AG04450 (cell line): ENCODE measurements at regions of chr1 and their contacts with region 1.

Region 1: DNA sequence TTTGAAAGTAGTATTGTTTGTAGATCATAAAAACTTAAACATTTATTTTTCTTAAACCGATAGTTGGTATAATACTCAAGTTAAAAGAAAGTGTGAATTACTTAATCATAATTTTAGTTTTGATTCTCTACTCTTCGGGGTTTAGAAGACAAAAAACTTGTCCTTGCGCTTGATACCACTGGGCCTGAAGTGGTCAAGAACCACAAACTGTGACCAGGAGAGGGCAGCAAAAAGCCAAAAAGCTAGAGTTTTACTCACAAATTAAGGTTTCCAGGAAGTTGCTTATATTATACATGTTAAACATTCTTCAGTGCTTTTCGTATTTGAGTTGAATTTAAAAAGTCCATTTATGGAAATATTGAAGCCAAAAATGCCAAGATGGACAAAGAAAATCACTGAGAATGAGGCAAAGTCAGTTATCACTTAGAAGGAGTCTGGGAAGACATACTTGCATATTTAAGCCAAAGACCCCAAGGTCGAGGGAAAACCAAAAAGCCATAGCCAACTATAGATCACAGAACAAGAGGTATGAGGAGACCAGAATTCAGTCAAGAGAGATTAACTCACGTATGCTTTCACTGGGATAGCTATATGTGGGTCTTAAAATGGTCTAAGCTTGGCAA is 34.2 kb downstream of the EFCAB7 start:
- DNase-seq: peak; percentile 8
- H3K4me3 ChIP-seq: no peak overlapping the region
- H3K27ac ChIP-seq: no peak overlapping the region
- H3K27me3 ChIP-seq: no peaks in the 10 kb centered on the region
- CTCF ChIP-seq: peak; percentile 71

Region 2: GRCh38 chr1:63173161-63173560 is 384.3 kb before region 1 on chr1:
- CTCF ChIA-PET with region 1: no interaction called
- POLR2A ChIA-PET with region 1: no interaction called
- DNase-seq: no peak
- H3K4me3 ChIP-seq: no peak overlapping the region
- H3K27ac ChIP-seq: no peak overlapping the region
- H3K27me3 ChIP-seq: no peaks in the 10 kb centered on the region
- CTCF ChIP-seq: no peak

Region 3: DNA sequence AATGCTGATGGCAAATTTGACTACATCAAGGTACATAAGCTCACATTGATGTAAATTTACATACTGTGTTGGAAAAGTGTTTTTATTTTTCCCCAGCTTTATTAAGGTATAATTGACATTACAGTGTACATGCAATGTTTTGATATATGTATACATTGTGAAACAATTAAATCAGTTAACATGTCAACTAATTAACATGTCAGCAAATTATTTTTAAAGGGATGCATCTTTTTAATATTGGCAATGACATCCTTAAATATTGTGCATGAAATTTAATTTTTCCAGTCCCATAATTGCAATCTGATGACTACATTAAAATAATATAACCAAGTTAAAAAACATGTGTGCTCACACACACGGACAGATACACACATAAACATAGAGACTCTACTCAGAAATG is 24.7 kb before region 1 on chr1:
- CTCF ChIA-PET with region 1: interaction called, 18 read pairs
- POLR2A ChIA-PET with region 1: no interaction called
- DNase-seq: no peak
- H3K4me3 ChIP-seq: no peak overlapping the region
- H3K27ac ChIP-seq: no peak overlapping the region
- H3K27me3 ChIP-seq: no peaks in the 10 kb centered on the region
- CTCF ChIP-seq: no peak

Region 4: DNA sequence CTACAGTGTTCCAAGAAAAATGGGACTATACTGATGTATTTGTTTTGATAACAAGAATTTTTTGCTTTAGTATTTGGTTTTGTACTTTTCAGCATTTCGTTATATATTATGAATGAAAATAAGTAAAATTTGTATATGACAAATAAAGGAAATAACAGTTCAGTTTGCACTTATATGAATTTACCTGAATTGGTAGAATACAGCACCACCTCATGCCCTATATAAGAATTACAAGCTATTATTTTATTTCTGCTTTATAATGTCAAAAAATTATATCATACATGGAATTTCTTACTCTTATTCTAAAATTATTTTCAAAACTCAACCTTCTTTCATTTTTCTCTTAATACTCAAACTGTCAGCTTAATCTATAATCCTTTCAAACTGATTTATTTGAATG is 19.5 kb before region 1 on chr1:
- CTCF ChIA-PET with region 1: interaction called, 18 read pairs
- POLR2A ChIA-PET with region 1: no interaction called
- DNase-seq: no peak
- H3K4me3 ChIP-seq: no peak overlapping the region
- H3K27ac ChIP-seq: no peak overlapping the region
- H3K27me3 ChIP-seq: no peaks in the 10 kb centered on the region
- CTCF ChIP-seq: peak; percentile 47

Region 5: GRCh38 chr1:63569068-63569467 is 11.6 kb after region 1 on chr1:
- CTCF ChIA-PET with region 1: interaction called, 18 read pairs
- POLR2A ChIA-PET with region 1: no interaction called
- DNase-seq: no peak
- H3K4me3 ChIP-seq: no peak overlapping the region
- H3K27ac ChIP-seq: no peak overlapping the region
- H3K27me3 ChIP-seq: no peaks in the 10 kb centered on the region
- CTCF ChIP-seq: no peak

Region 6: DNA sequence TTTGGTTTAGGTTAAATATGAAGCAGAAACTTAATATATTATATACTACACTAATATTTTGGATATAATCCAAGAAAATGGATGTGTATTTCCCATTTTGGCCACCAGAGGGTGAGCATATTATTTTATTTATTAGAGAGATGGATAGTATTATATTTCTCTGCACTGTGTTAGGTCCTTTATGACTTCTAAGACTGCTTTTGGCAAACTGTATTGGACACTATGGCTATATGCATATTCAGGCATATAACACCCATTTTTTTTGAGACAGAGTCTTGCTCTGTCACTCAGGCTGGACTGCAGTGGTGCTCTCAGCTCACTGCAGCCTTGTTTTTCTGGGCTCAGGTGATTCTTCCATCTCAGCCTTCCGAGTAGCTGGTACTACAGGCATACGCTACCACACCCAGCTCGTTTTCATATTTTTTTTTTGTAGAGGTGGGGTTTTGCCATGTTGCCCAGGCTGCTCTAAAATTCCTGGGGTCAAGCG is 17.9 kb after region 1 on chr1:
- CTCF ChIA-PET with region 1: interaction called, 26 read pairs
- POLR2A ChIA-PET with region 1: no interaction called
- DNase-seq: no peak
- H3K4me3 ChIP-seq: no peak overlapping the region
- H3K27ac ChIP-seq: no peak overlapping the region
- H3K27me3 ChIP-seq: no peaks in the 10 kb centered on the region
- CTCF ChIP-seq: peak; percentile 63

Region 7: DNA sequence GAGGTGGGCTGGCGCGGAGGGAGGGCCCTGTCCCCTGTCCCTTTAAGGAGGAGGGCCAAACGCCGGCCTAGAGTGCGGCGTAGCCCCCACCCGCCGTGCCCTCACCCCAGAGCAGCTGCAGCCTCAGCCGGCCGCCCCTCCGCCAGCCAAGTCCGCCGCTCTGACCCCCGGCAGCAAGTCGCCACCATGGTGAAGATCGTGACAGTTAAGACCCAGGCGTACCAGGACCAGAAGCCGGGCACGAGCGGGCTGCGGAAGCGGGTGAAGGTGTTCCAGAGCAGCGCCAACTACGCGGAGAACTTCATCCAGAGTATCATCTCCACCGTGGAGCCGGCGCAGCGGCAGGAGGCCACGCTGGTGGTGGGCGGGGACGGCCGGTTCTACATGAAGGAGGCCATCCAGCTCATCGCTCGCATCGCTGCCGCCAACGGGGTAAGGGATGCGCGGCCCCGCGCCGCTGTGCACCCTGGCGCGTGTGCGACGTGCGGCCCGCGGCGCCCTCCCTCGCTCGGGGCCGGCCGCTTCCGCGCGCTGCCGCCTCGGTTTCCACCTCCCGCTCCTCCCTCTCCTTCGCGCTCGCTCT is 35.9 kb after region 1 on chr1 and contains the start of gene PGM1:
- CTCF ChIA-PET with region 1: interaction called, 15 read pairs
- POLR2A ChIA-PET with region 1: no interaction called
- DNase-seq: peak; percentile 32
- H3K4me3 ChIP-seq: peak within 1 kb of the TSS; percentile 81
- H3K27ac ChIP-seq: peak within 1 kb of the TSS; percentile 68
- H3K27me3 ChIP-seq: no peaks in the 10 kb centered on the region
- CTCF ChIP-seq: no peak
- polyA plus RNA-seq, gene PGM1: 25.0 and 32.5 TPM in 2 replicates